ENCODE measurements at regions of chr17 and their contacts with region 1.

Region 1: GRCh38 chr17:47957591-47958428 is at the start of gene PRR15L:
- DNase-seq: no peak
- H3K4me3 ChIP-seq: no peak within 1 kb of the TSS
- H3K27ac ChIP-seq: no peak within 1 kb of the TSS
- H3K4me1 ChIP-seq: no peaks in the 10 kb centered on the region
- H3K27me3 ChIP-seq: no peaks in the 10 kb centered on the region
- CTCF ChIP-seq: no peak
- total RNA-seq, gene PRR15L: 0.14 TPM

Region 2: DNA sequence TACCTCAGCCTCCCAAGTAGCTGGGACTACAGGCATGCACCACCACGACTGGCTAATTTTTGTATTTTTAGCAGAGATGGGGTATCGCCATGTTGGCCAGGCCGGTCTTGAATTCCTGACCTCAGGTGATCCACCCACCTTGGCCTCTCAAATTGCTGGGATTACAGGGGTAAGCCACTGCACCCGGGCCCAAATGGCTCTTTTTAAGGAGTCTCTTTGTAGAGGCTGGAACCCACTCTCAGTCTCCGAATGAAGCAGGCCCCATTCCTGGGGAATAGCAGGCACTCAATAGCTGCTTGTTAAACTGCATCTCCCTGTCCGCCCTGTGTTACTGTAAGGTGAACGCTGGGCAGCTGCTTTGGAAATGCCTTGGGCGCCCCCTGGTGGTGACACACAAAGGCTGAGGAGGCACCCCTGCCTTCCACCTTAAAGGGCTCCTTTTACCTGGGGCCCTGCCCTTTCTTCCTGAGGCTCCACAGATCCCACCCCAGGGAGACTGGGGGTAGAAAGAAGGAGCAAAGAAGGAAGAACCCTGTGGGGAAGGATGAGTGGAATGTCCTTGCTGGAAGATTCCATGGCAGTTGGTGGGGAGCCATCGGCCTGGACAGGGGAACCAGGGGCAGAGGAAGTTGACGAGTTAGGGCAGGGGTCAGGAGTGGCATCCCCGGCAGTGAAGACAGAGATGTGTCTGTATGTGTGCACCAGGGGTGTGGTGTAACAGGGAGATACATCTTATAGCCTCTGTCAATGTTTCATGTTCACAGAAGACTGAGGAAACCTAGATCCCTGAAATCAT is 67.9 kb before region 1 on chr17:
- intact Hi-C with region 1: loop called (anchors 10 kb)
- DNase-seq: peak; percentile 89
- H3K4me3 ChIP-seq: no peak overlapping the region
- H3K27ac ChIP-seq: no peak overlapping the region
- H3K4me1 ChIP-seq: peaks cover 15% of the 10 kb centered on the region
- H3K27me3 ChIP-seq: no peaks in the 10 kb centered on the region
- CTCF ChIP-seq: peak; percentile 97